IMR-90 (cell line): ENCODE measurements at regions of chr7 and their contacts with region 1.

Region 1: GRCh38 chr7:139004321-139005075 is 23.3 kb upstream of the KIAA1549 start:
- DNase-seq: no peak
- ATAC-seq: no peak
- H3K4me3 ChIP-seq: no peak overlapping the region
- H3K27ac ChIP-seq: no peak overlapping the region
- H3K4me1 ChIP-seq: no peaks in the 10 kb centered on the region
- H3K27me3 ChIP-seq: peaks cover 4% of the 10 kb centered on the region
- CTCF ChIP-seq: no peak
- POLR2A ChIP-seq: no peak
- RAD21 ChIP-seq: no peak

Region 2: GRCh38 chr7:138752568-138753518 is 251.7 kb before region 1 on chr7:
- CTCF ChIA-PET with region 1: no interaction called
- POLR2A ChIA-PET with region 1: no interaction called
- dilution Hi-C with region 1: no loop called
- in situ Hi-C with region 1: no loop called
- intact Hi-C with region 1: no loop called
- DNase-seq: peak; percentile 3
- ATAC-seq: no peak
- H3K4me3 ChIP-seq: no peak overlapping the region
- H3K27ac ChIP-seq: no peak overlapping the region
- H3K4me1 ChIP-seq: no peaks in the 10 kb centered on the region
- H3K27me3 ChIP-seq: peaks cover 8% of the 10 kb centered on the region
- CTCF ChIP-seq: no peak
- POLR2A ChIP-seq: no peak
- RAD21 ChIP-seq: no peak

Region 3: GRCh38 chr7:139016931-139017511 is 12.5 kb after region 1 on chr7:
- CTCF ChIA-PET with region 1: interaction called, 11 read pairs
- POLR2A ChIA-PET with region 1: no interaction called
- dilution Hi-C with region 1: no loop called
- in situ Hi-C with region 1: no loop called
- intact Hi-C with region 1: no loop called
- DNase-seq: peak; percentile 75
- ATAC-seq: peak; percentile 97
- H3K4me3 ChIP-seq: no peak overlapping the region
- H3K27ac ChIP-seq: no peak overlapping the region
- H3K4me1 ChIP-seq: no peaks in the 10 kb centered on the region
- H3K27me3 ChIP-seq: peaks cover 5% of the 10 kb centered on the region; the same call in 1 of the 2 replicates
- CTCF ChIP-seq: peak; percentile 63
- POLR2A ChIP-seq: no peak
- RAD21 ChIP-seq: peak; percentile 53